Right lobe of liver (tissue), 6 donors: ENCODE measurements at regions of chr6 and their contacts with region 1.

Region 1: DNA sequence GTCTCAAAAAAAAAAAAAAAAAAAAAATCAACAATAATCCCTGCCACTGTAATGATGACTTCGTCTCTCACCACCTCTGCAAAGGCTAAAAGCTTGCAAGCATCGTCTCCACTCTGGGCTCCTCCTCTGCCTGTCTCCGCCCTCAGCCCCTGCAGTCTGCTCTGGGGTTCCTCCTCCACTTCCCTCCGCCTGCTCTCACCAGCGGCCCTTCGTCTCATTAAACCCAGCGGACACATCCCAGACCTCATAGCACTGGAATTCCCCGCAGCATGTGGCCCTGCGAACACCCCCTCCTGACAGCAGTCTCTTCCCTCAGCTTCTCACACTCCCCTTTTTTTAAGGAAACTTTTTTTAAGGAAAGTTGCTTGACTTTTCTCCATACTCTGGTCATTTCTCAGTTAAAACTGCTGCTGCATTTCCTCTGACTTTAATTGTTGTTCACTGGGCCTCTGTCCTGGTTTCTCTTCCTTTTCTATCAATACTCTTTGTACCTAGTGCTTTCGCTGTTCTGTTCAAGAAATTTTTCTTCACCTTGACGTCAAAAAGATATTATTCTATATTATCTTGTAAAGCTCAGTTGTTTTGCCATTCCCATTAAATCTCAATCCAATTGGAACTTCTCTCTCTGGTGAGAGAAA is 70.9 kb upstream of the PLEKHG1 start:
- DNase-seq: peak; percentile 45 to 62 (median 54)
- ATAC-seq: peak; percentile 79 to 94 (median 91)
- H3K4me3 ChIP-seq: no peak overlapping the region
- H3K27ac ChIP-seq: peak overlapping the region in 2 of 3 donors; percentile 18 to 55
- H3K4me1 ChIP-seq: no peaks in the 10 kb centered on the region
- H3K27me3 ChIP-seq: no peaks in the 10 kb centered on the region
- CTCF ChIP-seq: no peak
- POLR2A ChIP-seq: no peak

Region 2: DNA sequence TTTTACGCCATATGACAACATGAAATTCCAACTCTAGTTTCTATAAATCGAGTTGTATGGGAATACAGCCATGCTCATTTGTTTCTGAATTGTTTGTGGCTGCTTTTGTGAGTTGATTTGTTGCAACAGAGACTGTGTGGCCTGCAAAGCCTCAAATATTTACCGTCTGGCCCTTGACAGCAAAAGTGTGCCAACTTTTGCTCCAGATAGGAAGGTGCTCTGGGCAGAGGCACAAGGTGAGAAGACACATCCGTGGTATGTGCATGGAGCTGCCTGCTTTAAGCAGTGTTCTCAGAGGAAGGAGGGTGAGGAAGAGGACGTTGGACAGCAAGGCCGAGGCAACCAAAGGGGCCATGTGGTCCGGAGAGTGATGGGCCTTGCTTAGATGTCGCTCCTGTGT is 102.6 kb before region 1 on chr6:
- intact Hi-C with region 1: loop called in 1 of 2 experiments (anchors 5 kb)
- DNase-seq: peak in 1 of 3 donors; percentile 71
- ATAC-seq: peak; percentile 90 to 93 (median 92)
- H3K4me3 ChIP-seq: no peak overlapping the region
- H3K27ac ChIP-seq: peak overlapping the region in 1 of 3 donors; percentile 56
- H3K4me1 ChIP-seq: peaks cover 0 to 9% (median 4%) of the 10 kb centered on the region in 4 donors
- H3K27me3 ChIP-seq: no peaks in the 10 kb centered on the region
- CTCF ChIP-seq: no peak
- POLR2A ChIP-seq: no peak

Region 3: GRCh38 chr6:150600301-150601017 is 71.7 kb after region 1 on chr6:
- intact Hi-C with region 1: no loop called
- DNase-seq: peak; percentile 73 to 81 (median 80)
- ATAC-seq: peak; percentile 70 to 76 (median 76)
- H3K4me3 ChIP-seq: peak overlapping the region; percentile 77 to 87 (median 77)
- H3K27ac ChIP-seq: peak overlapping the region; percentile 81 to 91 (median 91)
- H3K4me1 ChIP-seq: peaks cover 0 to 13% (median 0%) of the 10 kb centered on the region in 4 donors
- H3K27me3 ChIP-seq: no peaks in the 10 kb centered on the region
- CTCF ChIP-seq: peak; percentile 40 to 60 (median 48)
- POLR2A ChIP-seq: peak; percentile 65